A673 (cell line): ENCODE measurements at regions of chr2 and their contacts with region 1.

Region 1: DNA sequence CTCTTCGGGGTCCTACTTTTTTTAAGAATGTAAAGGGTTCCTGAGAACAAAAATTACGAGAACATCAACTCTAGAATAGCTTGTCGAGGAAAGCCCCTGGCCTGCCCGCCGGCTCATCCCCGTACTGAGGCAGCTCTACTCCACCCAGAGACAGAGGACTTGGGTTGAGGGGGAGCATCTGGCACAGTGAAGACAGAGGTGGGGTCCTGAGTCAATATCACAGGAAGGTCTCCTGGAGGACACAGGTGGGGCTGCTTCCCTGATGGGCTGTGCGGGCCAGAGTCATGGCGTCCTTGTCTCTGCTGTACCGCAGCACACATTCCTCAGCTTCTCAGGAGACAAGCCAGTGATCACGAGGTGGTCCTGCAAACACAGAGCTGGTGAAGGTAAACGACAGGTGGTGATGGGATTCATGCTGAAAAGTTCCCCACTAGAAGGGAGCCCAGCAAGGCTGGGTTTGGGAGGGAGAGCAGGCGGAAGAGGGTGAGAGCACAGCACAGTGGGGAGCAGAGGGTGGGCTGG is 9.6 kb downstream of the TCF23 start:
- DNase-seq: no peak
- H3K4me3 ChIP-seq: no peak overlapping the region
- H3K27ac ChIP-seq: no peak overlapping the region
- H3K4me1 ChIP-seq: no peaks in the 10 kb centered on the region
- H3K27me3 ChIP-seq: no peaks in the 10 kb centered on the region
- CTCF ChIP-seq: no peak

Region 2: DNA sequence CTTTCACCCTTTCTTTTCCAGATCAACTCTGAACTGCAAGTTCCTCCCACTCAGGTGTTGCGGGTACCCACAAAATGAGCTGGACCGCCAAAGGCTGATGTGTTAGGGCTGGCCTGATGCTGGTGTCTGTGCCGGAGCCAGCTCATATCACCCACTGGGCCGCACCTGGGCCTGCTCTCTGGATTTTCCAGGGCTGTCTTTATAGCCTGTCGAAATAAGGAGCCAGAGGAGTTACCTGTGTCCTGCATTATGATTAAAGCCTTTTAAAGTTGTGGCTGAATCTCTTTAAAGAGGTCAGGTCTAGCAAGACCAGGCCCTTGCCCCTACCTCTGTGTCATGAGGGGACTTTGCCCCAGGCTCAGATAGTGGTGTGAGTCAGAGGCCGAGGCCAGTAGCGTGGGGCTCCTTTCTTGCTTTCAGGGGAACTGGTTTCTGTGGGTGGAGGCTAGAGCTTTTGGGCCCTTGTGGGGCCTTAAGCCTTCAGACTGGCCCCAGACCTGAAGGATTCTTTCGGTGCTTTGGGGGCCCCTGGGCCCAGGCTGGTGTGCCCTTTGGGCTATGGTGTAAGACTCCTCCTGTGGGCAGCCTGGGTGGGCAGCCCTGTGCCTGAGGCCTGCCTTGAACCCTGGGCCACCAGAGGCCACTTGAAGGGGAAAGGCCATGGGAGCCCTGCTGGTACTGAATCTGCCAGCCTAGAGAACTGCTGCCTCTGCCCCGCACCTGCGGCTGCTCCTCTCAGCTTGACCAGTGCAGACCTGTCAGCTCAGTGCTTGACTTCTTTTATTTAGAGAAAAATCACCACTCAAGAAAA is 701.8 kb before region 1 on chr2:
- CTCF ChIA-PET with region 1: no interaction called
- POLR2A ChIA-PET with region 1: interaction called, 12 read pairs
- intact Hi-C with region 1: no loop called
- DNase-seq: no peak
- H3K4me3 ChIP-seq: no peak overlapping the region
- H3K27ac ChIP-seq: no peak overlapping the region
- H3K4me1 ChIP-seq: no peaks in the 10 kb centered on the region
- H3K27me3 ChIP-seq: no peaks in the 10 kb centered on the region
- CTCF ChIP-seq: no peak

Region 3: DNA sequence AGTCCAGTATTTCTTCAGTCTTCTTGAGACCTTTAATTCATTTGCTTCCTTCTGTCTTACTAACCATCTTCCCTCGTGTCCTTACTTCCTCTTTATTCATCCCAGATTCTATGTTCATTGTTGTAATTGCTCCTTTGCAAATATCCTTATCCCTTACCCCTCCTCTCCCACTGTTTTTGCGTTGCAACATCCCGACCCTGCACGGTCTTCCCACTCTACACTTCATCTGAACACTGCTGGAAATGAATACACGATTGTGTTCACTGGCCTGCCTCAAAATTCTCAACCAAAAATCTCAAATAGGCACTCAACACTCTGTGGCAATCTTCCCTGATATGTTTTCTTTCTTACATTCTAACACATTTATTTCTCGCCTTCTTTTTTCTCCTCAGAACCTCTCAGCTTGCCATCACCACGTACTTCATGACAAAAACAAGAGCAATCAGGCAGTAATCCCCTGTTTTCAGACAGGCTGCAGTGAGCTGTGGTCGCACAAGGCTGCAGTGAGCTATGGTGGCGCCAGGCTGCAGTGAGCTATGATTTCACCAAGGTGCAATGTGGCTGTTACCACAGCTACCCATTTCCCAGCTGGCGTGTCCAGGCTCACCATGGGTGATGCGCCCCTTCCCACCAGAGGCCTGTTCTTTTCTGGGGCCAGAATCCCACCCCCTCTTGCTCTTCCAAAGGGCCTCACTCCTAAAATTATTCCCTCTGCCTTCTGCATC is 16.1 kb after region 1 on chr2:
- CTCF ChIA-PET with region 1: interaction called, 10 read pairs
- POLR2A ChIA-PET with region 1: no interaction called
- intact Hi-C with region 1: no loop called
- DNase-seq: no peak
- H3K4me3 ChIP-seq: no peak overlapping the region
- H3K27ac ChIP-seq: no peak overlapping the region
- H3K4me1 ChIP-seq: no peaks in the 10 kb centered on the region
- H3K27me3 ChIP-seq: no peaks in the 10 kb centered on the region
- CTCF ChIP-seq: no peak

Region 4: GRCh38 chr2:27217217-27218121 is 59.1 kb after region 1 on chr2 and contains the start of gene CAD:
- CTCF ChIA-PET with region 1: no interaction called
- POLR2A ChIA-PET with region 1: no interaction called
- intact Hi-C with region 1: no loop called
- DNase-seq: peak; percentile 96
- H3K4me3 ChIP-seq: peak within 1 kb of the TSS; percentile 61
- H3K27ac ChIP-seq: peak within 1 kb of the TSS; percentile 98
- H3K4me1 ChIP-seq: peaks cover 70% of the 10 kb centered on the region
- H3K27me3 ChIP-seq: no peaks in the 10 kb centered on the region
- CTCF ChIP-seq: 0 out of 2 replicates have a peak, but pooled peaks have one; percentile 16
- total RNA-seq, gene CAD: 194 and 210 TPM in 2 replicates

Region 5: GRCh38 chr2:27606611-27607010 is 448.2 kb after region 1 on chr2:
- CTCF ChIA-PET with region 1: no interaction called
- POLR2A ChIA-PET with region 1: no interaction called
- intact Hi-C with region 1: no loop called
- DNase-seq: no peak
- H3K4me3 ChIP-seq: no peak overlapping the region
- H3K27ac ChIP-seq: no peak overlapping the region
- H3K4me1 ChIP-seq: no peaks in the 10 kb centered on the region
- H3K27me3 ChIP-seq: no peaks in the 10 kb centered on the region
- CTCF ChIP-seq: no peak

Region 6: DNA sequence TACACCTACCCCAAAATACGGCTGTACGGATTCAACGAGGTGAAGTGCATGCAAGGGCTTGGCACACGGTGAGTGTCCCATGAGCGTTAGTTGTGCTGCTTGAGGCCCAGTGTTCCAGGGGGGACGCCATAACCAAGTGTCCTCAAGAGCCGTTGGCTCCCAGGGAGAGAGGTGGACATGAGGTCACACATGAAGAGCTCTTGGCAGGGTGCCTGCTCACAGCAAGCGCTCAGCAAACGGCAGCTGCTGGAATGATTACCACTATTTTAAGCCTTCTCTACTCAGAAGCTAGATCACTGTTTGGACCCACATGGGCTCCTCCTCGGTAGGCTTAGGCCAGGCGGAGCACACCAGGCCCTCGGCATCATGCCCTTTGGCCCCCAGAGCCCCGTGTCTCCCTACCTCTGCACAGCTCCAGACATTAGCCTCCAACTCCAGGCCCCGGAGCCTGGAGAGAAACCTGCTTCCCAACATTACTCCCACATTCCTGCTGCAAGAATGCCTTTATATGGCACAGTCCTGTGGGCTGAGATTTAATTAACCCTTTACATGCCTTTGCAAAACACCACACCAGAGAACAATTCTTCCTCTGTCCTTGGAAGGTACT is 1524.8 kb after region 1 on chr2:
- CTCF ChIA-PET with region 1: no interaction called
- POLR2A ChIA-PET with region 1: no interaction called
- intact Hi-C with region 1: no loop called
- DNase-seq: peak; percentile 41
- H3K4me3 ChIP-seq: no peak overlapping the region
- H3K27ac ChIP-seq: no peak overlapping the region
- H3K4me1 ChIP-seq: no peaks in the 10 kb centered on the region
- H3K27me3 ChIP-seq: no peaks in the 10 kb centered on the region
- CTCF ChIP-seq: no peak